BJ (cell line): ENCODE measurements at regions of chr11 and their contacts with region 1.

Region 1: GRCh38 chr11:126246636-126247035 is 22.1 kb downstream of the SRPRA start:
- DNase-seq: no peak
- H3K4me3 ChIP-seq: no peak overlapping the region
- H3K27me3 ChIP-seq: no peaks in the 10 kb centered on the region
- CTCF ChIP-seq: no peak

Region 2: DNA sequence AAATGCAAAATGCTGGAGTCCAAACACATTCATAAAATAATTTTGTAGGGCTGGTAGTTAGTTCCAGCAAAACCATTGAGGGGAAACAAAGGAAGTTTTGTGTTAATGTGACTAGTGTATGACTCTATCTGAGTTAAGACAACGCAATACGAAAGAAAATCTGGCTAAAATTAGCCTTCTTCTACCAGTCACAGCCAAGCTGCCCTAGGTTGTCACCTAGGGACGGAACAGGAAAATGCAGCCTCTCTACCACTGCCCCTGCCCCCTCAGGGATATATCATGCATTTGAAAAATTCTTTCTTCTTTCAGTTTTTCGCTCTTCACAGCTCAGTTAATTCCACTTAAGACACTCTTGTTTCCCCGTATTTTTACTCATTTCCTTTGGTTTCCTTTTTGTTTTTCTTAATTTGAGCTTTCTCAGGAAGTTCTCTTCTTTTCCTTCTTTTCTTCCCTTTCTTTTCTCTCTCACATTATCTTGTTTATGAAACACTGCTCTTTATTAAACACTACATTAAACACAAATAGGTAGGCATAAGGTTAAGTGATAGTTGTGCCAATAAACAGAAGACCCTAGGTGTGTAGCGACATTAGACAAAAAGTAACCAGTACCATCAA is 723.3 kb after region 1 on chr11:
- CTCF ChIA-PET with region 1: no interaction called
- POLR2A ChIA-PET with region 1: interaction called, 10 read pairs
- DNase-seq: no peak
- H3K4me3 ChIP-seq: no peak overlapping the region
- H3K27me3 ChIP-seq: no peaks in the 10 kb centered on the region
- CTCF ChIP-seq: peak; percentile 85